Ovary (tissue), 10 donors: ENCODE measurements at regions of chr6 and their contacts with region 1.

Region 1: DNA sequence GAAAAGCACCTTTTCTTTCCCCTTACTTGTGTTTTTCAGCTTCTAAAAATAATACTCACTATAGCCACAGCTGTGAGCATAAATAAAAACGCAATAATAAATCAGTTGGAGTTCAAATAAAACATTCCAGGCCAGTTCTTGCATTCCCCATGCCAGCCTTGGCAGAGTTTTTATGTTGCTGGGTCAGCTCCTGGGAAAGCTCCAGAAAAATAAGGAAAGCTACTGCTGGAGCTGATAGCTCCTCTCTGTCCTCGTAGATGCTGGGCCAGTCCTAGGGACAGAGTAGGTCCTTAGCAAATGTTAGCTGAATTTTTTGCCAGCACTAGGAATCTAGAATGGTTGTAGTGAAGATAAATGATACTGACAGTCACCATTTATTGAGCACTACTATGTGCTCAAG is 389.0 kb upstream of the SYNCRIP start:
- DNase-seq: peak in 2 of 5 donors; percentile 12 to 31
- H3K4me3 ChIP-seq: no peak overlapping the region
- H3K27ac ChIP-seq: no peak overlapping the region
- H3K4me1 ChIP-seq: peaks cover 2% of the 10 kb centered on the region
- H3K27me3 ChIP-seq: no peaks in the 10 kb centered on the region
- CTCF ChIP-seq: no peak
- EP300 ChIP-seq: no peak
- POLR2A ChIP-seq: no peak

Region 2: GRCh38 chr6:87115402-87116135 is 1083.9 kb after region 1 on chr6:
- intact Hi-C with region 1: loop called in 1 of 4 experiments (anchors 5 kb)
- DNase-seq: no peak
- H3K4me3 ChIP-seq: no peak overlapping the region
- H3K27ac ChIP-seq: no peak overlapping the region
- H3K4me1 ChIP-seq: no peaks in the 10 kb centered on the region
- H3K27me3 ChIP-seq: no peaks in the 10 kb centered on the region
- CTCF ChIP-seq: no peak
- EP300 ChIP-seq: no peak
- POLR2A ChIP-seq: no peak